Gastrocnemius medialis (tissue), 4 donors: ENCODE measurements at regions of chr1 and their contacts with region 1.

Region 1: DNA sequence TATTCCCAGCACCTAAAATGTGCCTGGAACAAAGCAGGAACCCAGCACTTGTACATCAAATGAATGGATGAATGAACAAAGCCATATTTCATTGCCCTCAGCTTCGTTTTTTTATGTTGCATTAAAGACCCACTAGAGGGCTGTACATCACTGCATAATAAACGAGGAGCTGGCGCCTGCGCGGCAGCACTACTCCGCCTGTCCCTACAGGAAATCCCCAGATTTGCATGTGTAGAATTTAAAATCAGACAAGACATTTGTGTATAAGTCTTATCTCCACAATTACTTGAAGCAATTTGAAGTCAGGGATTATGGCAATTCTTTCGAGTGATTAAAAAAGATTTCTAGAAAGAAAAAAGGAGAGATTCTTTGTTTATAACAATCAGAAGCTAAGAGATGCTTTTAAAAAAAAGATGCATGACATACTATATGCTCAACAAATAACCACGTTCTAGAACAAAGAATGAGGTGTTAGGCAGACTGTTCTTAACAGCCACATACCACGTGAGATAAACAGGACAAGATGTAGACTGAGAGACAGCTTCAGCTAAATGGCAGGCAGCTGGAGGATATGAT is 5.4 kb upstream of the NEK2 start:
- DNase-seq: peak; percentile 15 to 44
- ATAC-seq: peak; percentile 75 to 84
- H3K4me3 ChIP-seq: no peak overlapping the region
- H3K27ac ChIP-seq: no peak overlapping the region
- H3K4me1 ChIP-seq: peaks cover under 1 to 2% of the 10 kb centered on the region in 2 donors
- H3K27me3 ChIP-seq: no peaks in the 10 kb centered on the region
- CTCF ChIP-seq: peak; percentile 38 to 75 (median 62)
- POLR2A ChIP-seq: no peak

Region 2: GRCh38 chr1:212012034-212012740 is 331.3 kb after region 1 on chr1:
- in situ Hi-C with region 1: loop called in 1 of 4 experiments (anchors 25 kb)
- intact Hi-C with region 1: loop called (anchors 5 kb)
- DNase-seq: peak; percentile 17 to 55
- ATAC-seq: peak; percentile 63 to 83
- H3K4me3 ChIP-seq: no peak overlapping the region
- H3K27ac ChIP-seq: no peak overlapping the region
- H3K4me1 ChIP-seq: no peaks in the 10 kb centered on the region
- H3K27me3 ChIP-seq: no peaks in the 10 kb centered on the region
- CTCF ChIP-seq: peak; percentile 69 to 92 (median 78)
- POLR2A ChIP-seq: no peak

Region 3: DNA sequence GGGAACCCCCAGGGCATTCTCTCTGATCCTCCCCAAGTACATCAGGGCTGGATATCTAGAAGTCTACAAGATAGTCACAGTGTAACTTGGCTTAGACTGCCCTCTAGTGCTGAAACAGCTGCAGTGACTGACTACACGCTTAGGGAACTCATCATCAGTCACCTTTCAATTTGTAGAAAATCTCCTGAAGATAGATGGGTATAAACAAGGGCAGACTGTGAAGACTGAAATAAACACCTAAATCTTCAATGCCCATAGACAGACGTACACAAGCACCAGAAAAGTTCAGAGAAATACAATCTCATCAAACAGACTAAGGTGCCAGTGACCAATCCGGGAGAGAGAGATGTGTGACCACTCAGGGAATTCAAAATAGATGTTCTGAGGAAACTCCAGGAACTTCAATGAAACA is 687.2 kb after region 1 on chr1:
- in situ Hi-C with region 1: no loop called
- intact Hi-C with region 1: loop called (anchors 5 kb)
- DNase-seq: peak in 1 of 2 donors; percentile 52
- ATAC-seq: peak; percentile 91 to 94
- H3K4me3 ChIP-seq: no peak overlapping the region
- H3K27ac ChIP-seq: no peak overlapping the region
- H3K4me1 ChIP-seq: peaks cover 7 to 8% of the 10 kb centered on the region in 2 donors
- H3K27me3 ChIP-seq: no peaks in the 10 kb centered on the region
- CTCF ChIP-seq: peak; percentile 72 to 91 (median 77)
- POLR2A ChIP-seq: no peak

Region 4: DNA sequence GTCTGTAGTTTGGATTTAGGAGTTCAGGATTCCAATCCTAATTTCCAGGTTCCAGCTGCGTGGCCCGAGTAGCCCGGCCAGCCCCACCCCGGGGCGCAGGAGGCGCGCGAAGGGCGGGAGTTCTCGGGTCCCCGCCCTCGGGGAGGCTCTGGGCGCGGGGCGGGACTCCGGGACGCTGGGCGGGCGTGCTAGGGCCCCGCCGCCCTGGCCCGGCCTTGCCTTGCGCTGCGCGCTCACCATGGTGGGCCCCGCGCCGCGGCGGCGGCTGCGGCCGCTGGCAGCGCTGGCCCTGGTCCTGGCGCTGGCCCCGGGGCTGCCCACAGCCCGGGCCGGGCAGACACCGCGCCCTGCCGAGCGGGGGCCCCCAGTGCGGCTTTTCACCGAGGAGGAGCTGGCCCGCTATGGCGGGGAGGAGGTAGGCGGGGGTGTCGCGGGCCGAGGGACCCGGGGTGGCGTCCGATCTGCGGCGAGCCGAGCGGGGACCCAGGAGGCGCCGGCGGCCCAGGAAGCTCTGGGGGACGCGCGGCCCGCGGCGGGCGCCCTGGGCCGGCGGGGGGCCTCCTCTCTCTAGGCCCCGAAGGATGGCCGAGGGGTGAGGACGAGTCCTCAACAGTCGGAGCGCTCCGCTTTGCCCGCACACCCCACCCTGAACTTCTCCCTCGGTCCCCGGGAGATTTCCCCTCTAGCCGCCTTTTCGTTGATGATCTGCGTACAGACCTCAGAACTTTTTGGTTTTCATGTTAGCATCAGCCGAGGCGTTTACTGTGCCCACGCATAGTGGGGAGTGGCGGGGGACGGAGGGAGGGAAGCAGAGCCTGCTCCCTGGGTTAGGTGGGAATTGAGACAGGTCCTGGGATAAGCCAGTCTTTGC is 752.1 kb after region 1 on chr1 and contains the start of gene NENF:
- in situ Hi-C with region 1: loop called in 1 of 4 experiments (anchors 25 kb)
- intact Hi-C with region 1: no loop called
- DNase-seq: peak; percentile 47 to 71
- ATAC-seq: peak; percentile 90 to 93
- H3K4me3 ChIP-seq: peak within 1 kb of the TSS; percentile 66 to 76 (median 68)
- H3K27ac ChIP-seq: peak within 1 kb of the TSS; percentile 73 to 83 (median 78)
- H3K4me1 ChIP-seq: peaks cover 7 to 13% of the 10 kb centered on the region in 2 donors
- H3K27me3 ChIP-seq: no peaks in the 10 kb centered on the region
- CTCF ChIP-seq: no peak
- POLR2A ChIP-seq: peak; percentile 81 to 83
- total RNA-seq, gene NENF: 74.8 to 149 (median 112) TPM